ENCODE measurements at regions of chr12 and their contacts with region 1.

Region 1: GRCh38 chr12:104578453-104578852 is 121.7 kb downstream of the CHST11 start:
- DNase-seq: peak; percentile 63
- ATAC-seq: peak; percentile 65
- H3K4me3 Mint-ChIP-seq: no peak overlapping the region
- H3K27ac Mint-ChIP-seq: peak overlapping the region; percentile 8
- H3K4me1 Mint-ChIP-seq: peaks cover 75% of the 10 kb centered on the region
- H3K27me3 Mint-ChIP-seq: no peaks in the 10 kb centered on the region

Region 2: GRCh38 chr12:104494137-104494792 is 84.2 kb before region 1 on chr12:
- CTCF ChIA-PET with region 1: no interaction called
- POLR2A ChIA-PET with region 1: interaction called, 4 read pairs
- intact Hi-C with region 1: loop called in 1 of 2 experiments (anchors 2 kb)
- DNase-seq: peak; percentile 88
- ATAC-seq: peak; percentile 72
- H3K4me3 Mint-ChIP-seq: peak overlapping the region; percentile 35
- H3K27ac Mint-ChIP-seq: peak overlapping the region; percentile 85
- H3K4me1 Mint-ChIP-seq: peaks cover 88% of the 10 kb centered on the region
- H3K27me3 Mint-ChIP-seq: no peaks in the 10 kb centered on the region

Region 3: DNA sequence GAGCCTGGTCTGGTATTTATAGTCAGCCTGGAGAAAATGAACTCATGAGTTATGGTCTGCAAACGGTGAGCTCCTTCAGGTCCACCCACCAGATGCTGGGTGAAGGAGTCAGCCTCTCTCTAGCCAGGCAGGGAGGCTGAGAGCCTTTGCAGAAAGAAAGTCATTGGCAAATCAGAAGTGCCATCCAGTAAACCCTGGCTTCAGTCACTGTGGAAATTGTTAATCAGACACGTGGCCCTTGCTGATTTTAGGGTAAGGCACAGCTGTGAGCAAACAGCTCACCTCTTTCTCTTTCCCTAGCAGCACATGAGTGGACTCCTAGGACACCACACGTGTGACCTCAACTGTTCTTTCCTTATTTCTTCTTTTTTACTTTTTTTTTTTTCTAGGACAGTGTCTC is 76.8 kb before region 1 on chr12:
- CTCF ChIA-PET with region 1: no interaction called
- POLR2A ChIA-PET with region 1: no interaction called
- intact Hi-C with region 1: loop called in 1 of 2 experiments (anchors 2 kb)
- DNase-seq: peak; percentile 57
- ATAC-seq: peak; percentile 58
- H3K4me3 Mint-ChIP-seq: no peak overlapping the region
- H3K27ac Mint-ChIP-seq: peak overlapping the region; percentile 27
- H3K4me1 Mint-ChIP-seq: peaks cover 83% of the 10 kb centered on the region
- H3K27me3 Mint-ChIP-seq: no peaks in the 10 kb centered on the region

Region 4: DNA sequence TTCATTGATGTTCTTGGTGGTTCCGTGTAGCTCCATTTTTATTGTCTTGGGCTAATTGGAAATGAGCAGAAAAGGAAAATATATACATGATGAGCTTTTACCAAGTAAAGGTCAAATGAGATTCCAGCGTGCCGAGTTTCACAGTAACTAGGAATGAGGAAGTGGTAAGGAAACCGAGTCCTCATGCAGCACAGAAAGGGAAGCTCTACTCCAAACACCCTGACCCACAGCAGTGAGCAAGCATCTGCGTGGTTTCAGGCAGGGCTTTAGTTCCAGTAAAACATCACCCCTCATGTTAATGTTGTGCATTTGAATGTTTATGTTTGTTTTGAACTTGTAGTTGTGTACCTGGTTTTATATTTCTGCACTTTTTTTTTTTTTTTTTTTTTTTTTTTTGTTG is 171.6 kb after region 1 on chr12:
- CTCF ChIA-PET with region 1: no interaction called
- POLR2A ChIA-PET with region 1: no interaction called
- intact Hi-C with region 1: no loop called
- DNase-seq: no peak
- ATAC-seq: no peak
- H3K4me3 Mint-ChIP-seq: no peak overlapping the region
- H3K27ac Mint-ChIP-seq: no peak overlapping the region
- H3K4me1 Mint-ChIP-seq: peaks cover 45% of the 10 kb centered on the region
- H3K27me3 Mint-ChIP-seq: no peaks in the 10 kb centered on the region